Activated B cell treated with CpG ODN at 0.5 μM for 24 hours (primary cell): ENCODE measurements at regions of chr10 and their contacts with region 1.

Region 1: GRCh38 chr10:124403548-124403947 is 15.2 kb downstream of the OAT start:
- DNase-seq: no peak
- ATAC-seq: peak; percentile 100
- H3K4me3 Mint-ChIP-seq: no peak overlapping the region
- H3K27ac Mint-ChIP-seq: peak overlapping the region; percentile 59
- H3K4me1 Mint-ChIP-seq: peaks cover 9% of the 10 kb centered on the region
- H3K27me3 Mint-ChIP-seq: no peaks in the 10 kb centered on the region
- CTCF ChIP-seq: no peak

Region 2: DNA sequence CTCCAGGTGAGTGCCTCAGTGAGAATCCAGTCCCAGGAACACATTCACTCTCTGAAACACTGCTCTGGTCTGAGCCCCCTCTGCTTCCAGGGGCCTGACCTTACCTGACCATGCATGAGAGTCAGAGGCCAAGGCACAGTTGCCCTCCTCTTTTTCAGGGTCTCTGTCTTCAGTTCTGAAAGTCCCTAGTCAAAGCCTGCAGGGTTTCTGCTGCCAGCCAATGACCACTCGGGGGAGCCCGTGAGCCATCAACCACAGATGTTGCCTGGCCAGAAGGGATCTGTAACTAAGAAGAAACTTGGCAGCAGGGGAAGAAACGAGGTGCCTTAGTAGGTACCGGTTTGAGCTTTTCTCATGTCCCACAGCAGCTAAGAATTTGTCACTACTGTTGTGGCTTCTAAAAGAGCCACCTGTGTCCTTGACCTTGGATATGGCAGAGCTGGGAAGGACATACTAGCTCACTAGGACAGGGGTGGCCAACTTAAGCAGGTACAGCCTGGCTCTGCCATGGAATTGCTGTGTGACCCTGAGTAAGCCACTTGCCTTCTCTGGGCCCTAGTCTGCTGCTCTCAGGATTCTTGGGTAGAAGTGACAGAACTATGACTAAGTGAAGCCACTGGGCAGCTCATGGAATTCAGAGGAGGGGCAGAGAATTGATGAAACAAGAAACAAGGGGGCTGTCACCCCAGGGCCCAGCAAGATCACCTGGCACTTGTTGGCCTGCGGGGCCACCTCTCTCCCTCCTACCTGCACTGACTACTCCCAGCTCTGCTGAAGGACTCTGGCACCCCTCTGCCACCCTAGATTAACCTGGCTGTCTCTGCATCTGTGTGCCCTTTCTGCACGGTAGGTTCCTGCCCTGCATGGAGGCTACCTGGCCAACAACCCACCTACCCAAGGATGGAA is 821.2 kb before region 1 on chr10:
- CTCF ChIA-PET with region 1: interaction called, 6 read pairs
- POLR2A ChIA-PET with region 1: no interaction called
- intact Hi-C with region 1: loop called (anchors 1 kb)
- DNase-seq: peak; percentile 55
- ATAC-seq: peak; percentile 72
- H3K4me3 Mint-ChIP-seq: no peak overlapping the region
- H3K27ac Mint-ChIP-seq: no peak overlapping the region
- H3K4me1 Mint-ChIP-seq: no peaks in the 10 kb centered on the region
- H3K27me3 Mint-ChIP-seq: peaks cover 43% of the 10 kb centered on the region
- CTCF ChIP-seq: peak; percentile 31

Region 3: DNA sequence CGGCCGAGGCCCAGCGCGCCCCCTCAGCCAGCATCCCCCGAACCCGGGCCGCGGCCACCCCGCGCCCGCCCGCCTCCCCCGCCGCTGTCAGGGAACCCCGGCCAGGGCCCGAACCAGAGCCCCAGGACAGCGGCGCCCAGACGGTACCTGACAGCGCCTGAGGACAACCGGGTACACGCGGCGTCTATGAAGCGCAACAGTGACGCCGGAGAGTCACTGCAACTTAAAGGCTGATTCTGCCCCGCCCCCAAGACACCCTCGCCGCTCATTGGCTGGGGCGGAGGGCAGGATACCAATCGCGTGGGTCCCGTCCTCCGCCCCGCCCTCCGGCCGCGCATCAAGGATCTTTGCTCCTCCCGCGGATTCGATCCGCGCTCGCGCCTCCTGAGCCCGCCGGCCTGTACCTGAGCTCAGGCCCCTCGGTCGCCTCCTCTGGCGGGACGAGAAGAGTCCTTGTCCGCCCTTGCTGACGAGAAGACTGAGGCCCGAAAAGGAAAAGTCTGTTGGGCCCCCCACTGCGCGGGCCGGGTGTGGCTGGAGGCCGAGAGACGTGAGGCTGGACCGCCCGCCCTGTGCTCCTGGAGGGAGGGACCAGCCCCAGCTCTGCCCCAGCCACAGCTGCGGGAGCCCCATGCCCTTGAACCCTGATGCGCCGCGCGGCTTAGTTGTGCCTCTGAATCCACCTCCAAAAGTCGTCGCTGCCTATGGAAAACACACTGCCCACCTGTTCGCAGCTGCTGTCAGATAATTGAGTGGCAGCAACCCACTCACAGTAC is 15.4 kb after region 1 on chr10 and contains the start of gene OAT:
- CTCF ChIA-PET with region 1: interaction called, 11 read pairs
- POLR2A ChIA-PET with region 1: interaction called, 6 read pairs
- intact Hi-C with region 1: loop called (anchors 1 kb)
- DNase-seq: peak; percentile 92
- ATAC-seq: peak; percentile 97
- H3K4me3 Mint-ChIP-seq: peak within 1 kb of the TSS; percentile 82
- H3K27ac Mint-ChIP-seq: peak within 1 kb of the TSS; percentile 46
- H3K4me1 Mint-ChIP-seq: peaks cover 12% of the 10 kb centered on the region
- H3K27me3 Mint-ChIP-seq: peaks cover 19% of the 10 kb centered on the region
- CTCF ChIP-seq: no peak
- total RNA-seq, gene OAT: 19.6 and 20.1 TPM in 2 replicates